ENCODE measurements at regions of chr4 and their contacts with region 1.

Region 1: GRCh38 chr4:26860157-26860921 is at the start of gene STIM2:
- DNase-seq: peak; percentile 99
- H3K4me3 Mint-ChIP-seq: peak within 1 kb of the TSS; percentile 99
- H3K27ac Mint-ChIP-seq: peak within 1 kb of the TSS; percentile 94
- H3K4me1 Mint-ChIP-seq: peaks cover 44% of the 10 kb centered on the region
- H3K27me3 Mint-ChIP-seq: no peaks in the 10 kb centered on the region
- total RNA-seq, gene STIM2: 37.8 to 40.6 TPM

Region 2: DNA sequence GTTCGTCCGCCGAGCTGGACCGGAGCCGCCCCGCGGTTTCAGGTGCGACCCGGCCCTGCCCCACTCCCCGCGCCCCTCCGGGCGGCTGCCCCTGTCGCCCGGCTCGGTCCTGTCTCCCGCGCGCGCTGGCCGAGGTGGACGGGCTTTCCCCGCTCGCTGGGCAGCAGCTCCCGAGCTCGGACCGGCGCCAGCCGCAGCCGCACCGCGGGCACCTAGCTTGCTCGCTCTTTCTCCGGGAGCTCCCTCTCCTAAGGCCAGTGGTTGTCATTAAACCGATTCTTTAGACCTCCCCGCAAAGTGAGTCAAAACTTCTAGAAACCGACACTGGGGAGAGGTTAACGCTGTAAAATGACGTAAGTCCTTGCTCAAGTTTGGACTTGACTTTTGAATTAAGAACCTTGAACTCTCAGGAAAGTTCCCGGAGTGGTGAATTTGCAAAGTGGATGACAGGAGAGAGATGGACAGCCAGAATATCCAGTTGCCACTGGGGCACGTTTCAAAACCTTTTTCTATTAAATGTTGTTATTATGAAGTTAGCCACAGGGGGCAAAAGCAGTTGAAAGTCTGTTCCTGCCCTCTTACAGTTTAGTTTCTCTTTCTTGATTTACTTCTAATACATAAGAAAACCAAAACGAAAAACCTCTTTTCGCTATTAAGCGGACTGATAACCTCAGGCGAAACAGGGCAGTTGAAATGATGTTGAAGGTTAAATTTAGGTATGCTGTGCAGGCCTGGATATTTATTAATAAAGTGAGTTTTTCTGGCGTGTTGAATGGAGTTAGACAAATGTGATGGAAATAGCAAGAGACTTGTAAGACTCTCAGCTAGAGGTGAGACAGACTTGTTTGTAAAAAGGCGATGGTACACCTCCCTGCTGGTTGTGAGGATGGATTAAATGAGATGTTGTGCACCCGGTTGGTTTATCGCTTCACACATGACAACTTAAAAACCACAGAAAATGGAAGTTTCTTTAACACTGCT is 1625.7 kb before region 1 on chr4:
- CTCF ChIA-PET with region 1: no interaction called
- POLR2A ChIA-PET with region 1: no interaction called
- intact Hi-C with region 1: loop called (anchors 10 kb)
- DNase-seq: peak; percentile 59
- H3K4me3 Mint-ChIP-seq: peak overlapping the region; percentile 93
- H3K27ac Mint-ChIP-seq: peak overlapping the region; percentile 94
- H3K4me1 Mint-ChIP-seq: peaks cover 51% of the 10 kb centered on the region
- H3K27me3 Mint-ChIP-seq: no peaks in the 10 kb centered on the region

Region 3: GRCh38 chr4:26081795-26082498 is 778.4 kb before region 1 on chr4:
- CTCF ChIA-PET with region 1: no interaction called
- POLR2A ChIA-PET with region 1: no interaction called
- intact Hi-C with region 1: loop called (anchors 5 kb)
- DNase-seq: no peak
- H3K4me3 Mint-ChIP-seq: peak overlapping the region; percentile 1
- H3K27ac Mint-ChIP-seq: peak overlapping the region; percentile 90
- H3K4me1 Mint-ChIP-seq: peaks cover 88% of the 10 kb centered on the region
- H3K27me3 Mint-ChIP-seq: no peaks in the 10 kb centered on the region

Region 4: GRCh38 chr4:26583865-26584652 is 276.3 kb before region 1 on chr4 and contains the start of gene TBC1D19:
- CTCF ChIA-PET with region 1: no interaction called
- POLR2A ChIA-PET with region 1: interaction called, 9 read pairs
- intact Hi-C with region 1: loop called (anchors 1 kb)
- DNase-seq: peak; percentile 94
- H3K4me3 Mint-ChIP-seq: peak within 1 kb of the TSS; percentile 97
- H3K27ac Mint-ChIP-seq: peak within 1 kb of the TSS; percentile 93
- H3K4me1 Mint-ChIP-seq: peaks cover 20% of the 10 kb centered on the region
- H3K27me3 Mint-ChIP-seq: no peaks in the 10 kb centered on the region
- total RNA-seq, gene TBC1D19: 4.3 to 5.0 TPM

Region 5: GRCh38 chr4:26793735-26794134 is 66.6 kb before region 1 on chr4:
- CTCF ChIA-PET with region 1: no interaction called
- POLR2A ChIA-PET with region 1: no interaction called
- intact Hi-C with region 1: no loop called
- DNase-seq: no peak
- H3K4me3 Mint-ChIP-seq: no peak overlapping the region
- H3K27ac Mint-ChIP-seq: no peak overlapping the region
- H3K4me1 Mint-ChIP-seq: no peaks in the 10 kb centered on the region
- H3K27me3 Mint-ChIP-seq: no peaks in the 10 kb centered on the region

Region 6: DNA sequence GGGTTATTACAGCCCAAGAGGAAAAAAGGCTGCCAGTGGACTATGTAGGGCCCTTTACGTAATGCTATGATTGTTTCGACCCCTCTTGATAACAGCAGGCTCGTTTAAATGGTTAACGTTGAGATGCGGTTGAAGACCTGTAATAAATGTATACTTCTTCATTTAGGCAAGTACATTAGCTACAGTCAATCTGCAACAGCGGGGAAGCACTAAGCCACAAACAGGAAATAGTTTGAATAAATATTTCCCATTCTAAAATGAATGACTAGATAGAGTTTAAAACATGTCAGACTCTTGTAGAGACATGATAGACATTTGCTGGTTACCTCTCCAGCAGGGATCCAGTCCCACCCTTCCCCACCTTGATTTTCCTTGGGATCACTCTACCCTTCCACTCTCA is 37.8 kb before region 1 on chr4:
- CTCF ChIA-PET with region 1: no interaction called
- POLR2A ChIA-PET with region 1: no interaction called
- intact Hi-C with region 1: no loop called
- DNase-seq: peak; percentile 20
- H3K4me3 Mint-ChIP-seq: no peak overlapping the region
- H3K27ac Mint-ChIP-seq: no peak overlapping the region
- H3K4me1 Mint-ChIP-seq: peaks cover 12% of the 10 kb centered on the region
- H3K27me3 Mint-ChIP-seq: no peaks in the 10 kb centered on the region

Region 7: GRCh38 chr4:26873391-26874026 is 13.2 kb after region 1 on chr4:
- CTCF ChIA-PET with region 1: interaction called, 8 read pairs
- POLR2A ChIA-PET with region 1: interaction called, 37 read pairs
- intact Hi-C with region 1: loop called (anchors 1 kb)
- DNase-seq: peak; percentile 87
- H3K4me3 Mint-ChIP-seq: peak overlapping the region; percentile 43
- H3K27ac Mint-ChIP-seq: peak overlapping the region; percentile 88
- H3K4me1 Mint-ChIP-seq: peaks cover 77% of the 10 kb centered on the region
- H3K27me3 Mint-ChIP-seq: no peaks in the 10 kb centered on the region

Region 8: DNA sequence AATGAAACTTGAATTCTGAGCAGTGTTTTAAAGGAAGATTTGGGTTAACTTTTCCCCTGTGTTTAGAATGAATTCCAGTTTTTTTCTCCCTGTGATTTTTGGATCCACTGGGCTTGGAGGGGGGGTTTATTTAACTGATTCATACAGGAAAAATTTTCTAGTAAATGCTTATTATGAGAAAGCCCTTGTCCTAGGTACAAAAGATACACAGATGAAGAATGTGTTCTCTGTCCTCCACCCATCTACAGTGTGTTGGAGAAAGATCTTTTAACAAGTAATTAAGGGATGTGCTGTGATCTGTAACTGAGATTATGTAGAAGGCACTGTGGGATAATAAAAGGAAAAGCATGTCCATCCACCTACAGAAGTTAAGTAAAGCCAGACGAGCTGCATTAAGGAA is 104.2 kb after region 1 on chr4:
- CTCF ChIA-PET with region 1: no interaction called
- POLR2A ChIA-PET with region 1: no interaction called
- intact Hi-C with region 1: loop called (anchors 1 kb)
- DNase-seq: no peak
- H3K4me3 Mint-ChIP-seq: no peak overlapping the region
- H3K27ac Mint-ChIP-seq: no peak overlapping the region
- H3K4me1 Mint-ChIP-seq: peaks cover 49% of the 10 kb centered on the region
- H3K27me3 Mint-ChIP-seq: no peaks in the 10 kb centered on the region

Measured in activated CD4-positive, alpha-beta memory T cell treated with anti-CD3 and anti-CD28 coated beads for 36 hours (primary cell).